ENCODE measurements at regions of chr11 and their contacts with region 1.

Region 1: DNA sequence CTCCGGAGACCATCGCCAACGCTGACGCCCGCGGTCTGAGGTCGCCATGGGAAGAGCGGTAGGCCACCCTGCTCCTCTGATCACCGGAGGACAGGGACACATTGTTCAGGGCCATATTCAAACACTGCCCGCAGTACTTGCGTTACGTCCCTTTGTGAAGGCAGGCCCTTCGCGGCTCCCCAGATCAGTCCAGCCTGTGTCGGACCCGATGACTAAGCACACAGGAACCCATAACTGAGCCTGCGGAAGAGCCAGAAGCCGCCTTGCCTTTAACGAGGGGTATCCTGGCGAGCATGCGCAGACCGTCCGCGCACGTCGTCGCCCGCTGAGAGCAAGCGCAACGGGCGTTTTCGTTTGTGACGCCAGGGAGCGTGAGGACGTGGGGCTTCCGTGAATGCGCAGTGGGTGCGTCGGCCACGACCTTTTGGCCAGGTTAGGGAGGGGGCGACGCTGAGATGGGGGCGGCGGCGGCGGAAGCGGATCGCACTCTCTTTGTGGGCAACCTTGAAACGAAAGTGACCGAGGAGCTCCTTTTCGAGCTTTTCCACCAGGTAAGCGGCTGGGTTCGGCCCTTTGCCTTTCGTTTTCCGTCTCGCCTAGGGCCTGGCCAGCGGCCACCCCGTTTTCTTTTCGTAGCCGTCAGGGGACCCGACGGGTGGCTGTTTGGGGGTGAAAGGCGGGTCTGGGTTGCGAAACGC is at the starts of genes C11orf71 and RBM7:
- DNase-seq: peak; percentile 97 to 98
- ATAC-seq: peak; percentile 92 to 96
- H3K4me3 ChIP-seq: peak within 1 kb of the TSS; percentile 66 to 97 (median 83)
- H3K27ac ChIP-seq: peak within 1 kb of the TSS; percentile 94 to 100 (median 98)
- H3K4me1 ChIP-seq: peaks cover 27 to 41% of the 10 kb centered on the region in 2 donors
- H3K27me3 ChIP-seq: no peaks in the 10 kb centered on the region
- CTCF ChIP-seq: no peak
- POLR2A ChIP-seq: peak; percentile 85 to 94
- total RNA-seq, gene C11orf71: 3.4 to 18.0 (median 8.7) TPM
- total RNA-seq, gene RBM7: 6.2 to 14.9 (median 11.6) TPM

Region 2: DNA sequence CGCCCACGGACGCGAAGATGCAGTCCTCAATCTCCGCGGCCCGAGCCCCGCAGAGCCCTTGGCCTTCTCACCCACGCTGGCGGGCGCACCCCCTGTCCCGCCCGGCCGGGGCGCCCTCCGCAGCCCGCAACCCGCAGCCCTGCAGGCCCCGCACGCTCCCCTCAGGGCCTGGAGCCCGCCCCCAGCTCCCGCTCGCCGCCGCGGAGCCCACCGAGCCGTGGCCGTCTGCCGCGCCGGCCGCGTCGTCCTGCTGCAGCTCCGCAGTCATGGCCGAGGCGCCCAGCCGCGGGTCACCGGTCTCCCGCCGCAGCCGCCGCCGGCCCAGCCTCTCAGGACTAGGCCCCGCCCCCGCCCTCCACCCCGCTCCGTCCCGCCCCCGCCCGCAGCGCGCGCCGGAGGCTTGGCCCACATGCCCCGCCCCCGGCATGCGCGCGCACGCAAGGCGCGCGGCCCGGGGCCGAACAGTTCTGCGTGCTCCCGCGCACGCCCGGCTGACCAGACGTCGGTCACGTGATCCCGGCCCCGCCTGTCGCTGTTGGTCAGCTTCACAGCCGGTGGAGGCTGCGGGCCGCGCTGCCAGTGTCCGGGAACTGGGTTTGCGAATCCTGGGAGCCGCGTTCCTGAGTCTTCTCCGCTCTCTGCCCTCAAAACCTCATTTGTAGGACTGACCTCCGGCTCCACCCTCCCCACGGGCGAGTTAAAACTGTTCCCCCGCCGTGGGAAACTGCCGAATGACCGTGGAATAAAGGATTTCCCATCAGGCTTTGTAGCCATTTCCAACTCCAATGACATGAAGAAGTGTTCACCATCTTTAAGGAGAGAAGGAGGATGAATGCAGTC is 524.9 kb before region 1 on chr11 and contains the start of gene USP28:
- in situ Hi-C with region 1: no loop called
- intact Hi-C with region 1: loop called (anchors 5 kb)
- DNase-seq: peak; percentile 96 to 97
- ATAC-seq: peak; percentile 74 to 75
- H3K4me3 ChIP-seq: peak within 1 kb of the TSS; percentile 71 to 85 (median 80)
- H3K27ac ChIP-seq: peak within 1 kb of the TSS; percentile 92 to 99 (median 96)
- H3K4me1 ChIP-seq: peaks cover 38 to 43% of the 10 kb centered on the region in 2 donors
- H3K27me3 ChIP-seq: no peaks in the 10 kb centered on the region
- CTCF ChIP-seq: peak in 3 of 5 experiments; percentile 13 to 44 (median 15)
- POLR2A ChIP-seq: peak; percentile 93 to 98
- total RNA-seq, gene USP28: 56.7 to 141 (median 80.4) TPM

Region 3: GRCh38 chr11:114348200-114349191 is 51.9 kb before region 1 on chr11:
- in situ Hi-C with region 1: no loop called
- intact Hi-C with region 1: loop called (anchors 5 kb)
- DNase-seq: no peak
- ATAC-seq: peak in 1 of 2 donors; percentile 74
- H3K4me3 ChIP-seq: no peak overlapping the region
- H3K27ac ChIP-seq: no peak overlapping the region
- H3K4me1 ChIP-seq: no peaks in the 10 kb centered on the region
- H3K27me3 ChIP-seq: no peaks in the 10 kb centered on the region
- CTCF ChIP-seq: peak; percentile 20 to 51 (median 47)
- POLR2A ChIP-seq: no peak

Measured in gastrocnemius medialis (tissue), 4 donors.